ENCODE measurements at regions of chr7 and their contacts with region 1.

Region 1: GRCh38 chr7:51376420-51377092 is 59.9 kb upstream of the COBL start:
- DNase-seq: no peak
- ATAC-seq: peak; percentile 38; the same call in 1 of the 2 replicates
- H3K4me3 ChIP-seq: no peak overlapping the region
- H3K27ac ChIP-seq: no peak overlapping the region
- H3K4me1 ChIP-seq: no peaks in the 10 kb centered on the region
- H3K27me3 ChIP-seq: 0 out of 2 replicates have a peak, but pooled peaks cover 2% of the 10 kb centered on the region
- CTCF ChIP-seq: no peak

Region 2: DNA sequence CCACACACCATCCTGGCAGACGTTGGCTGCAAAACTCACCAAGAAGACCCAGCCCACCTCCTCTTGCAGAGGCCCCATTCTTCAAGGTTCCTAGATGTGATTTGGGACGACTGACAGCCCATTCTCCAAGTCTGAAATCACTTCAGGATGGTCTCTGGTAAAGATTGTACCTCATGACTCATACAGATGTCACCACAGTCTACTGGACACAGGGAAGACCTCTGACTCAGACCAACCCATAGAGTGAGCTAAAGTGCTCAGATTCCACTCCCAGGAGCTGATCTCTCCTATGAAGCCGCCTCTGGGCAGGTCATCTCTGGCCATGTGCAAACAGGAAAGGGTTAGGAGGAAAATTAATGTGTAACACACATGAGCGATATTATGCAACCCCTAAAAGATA is 1705.6 kb before region 1 on chr7:
- CTCF ChIA-PET with region 1: no interaction called
- POLR2A ChIA-PET with region 1: interaction called, 10 read pairs
- in situ Hi-C with region 1: no loop called
- intact Hi-C with region 1: no loop called
- DNase-seq: no peak
- ATAC-seq: no peak
- H3K4me3 ChIP-seq: no peak overlapping the region
- H3K27ac ChIP-seq: no peak overlapping the region
- H3K4me1 ChIP-seq: no peaks in the 10 kb centered on the region
- H3K27me3 ChIP-seq: no peaks in the 10 kb centered on the region
- CTCF ChIP-seq: no peak